ENCODE measurements at regions of chr5 and their contacts with region 1.

Region 1: DNA sequence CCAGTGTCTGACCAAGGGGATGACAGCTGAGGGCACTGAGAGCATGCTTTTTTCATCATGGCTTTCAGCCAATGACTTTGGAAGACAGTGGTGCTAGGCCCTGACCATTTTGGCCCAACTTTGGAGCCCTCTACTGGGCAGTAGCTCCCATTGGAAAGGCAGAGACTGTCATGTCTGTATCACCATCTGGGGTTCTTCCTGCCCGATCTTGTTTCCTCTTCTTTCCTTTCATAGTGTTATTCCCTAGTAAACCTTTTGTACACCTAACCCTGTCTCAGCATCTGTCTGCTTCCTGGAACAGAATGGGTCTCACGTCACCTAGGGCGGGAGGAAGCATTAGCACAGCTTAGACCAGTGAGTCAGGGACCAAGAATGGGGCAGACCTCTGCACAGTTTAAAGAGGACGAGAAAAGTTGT is 97.4 kb upstream of the MAST4 start:
- DNase-seq: no peak
- ATAC-seq: peak; percentile 93

Region 2: GRCh38 chr5:66285343-66285922 is 213.4 kb before region 1 on chr5:
- intact Hi-C with region 1: no loop called
- DNase-seq: no peak
- ATAC-seq: peak; percentile 25

Region 3: GRCh38 chr5:66426259-66427138 is 72.3 kb before region 1 on chr5:
- intact Hi-C with region 1: loop called (anchors 10 kb)
- DNase-seq: no peak
- ATAC-seq: peak; percentile 10

Region 4: GRCh38 chr5:66849803-66850202 is 351.0 kb after region 1 on chr5:
- intact Hi-C with region 1: no loop called
- DNase-seq: no peak
- ATAC-seq: peak; percentile 20

Measured in left ventricle myocardium superior (tissue), 1 donor.